AG04450 (cell line): ENCODE measurements at regions of chr12 and their contacts with region 1.

Region 1: DNA sequence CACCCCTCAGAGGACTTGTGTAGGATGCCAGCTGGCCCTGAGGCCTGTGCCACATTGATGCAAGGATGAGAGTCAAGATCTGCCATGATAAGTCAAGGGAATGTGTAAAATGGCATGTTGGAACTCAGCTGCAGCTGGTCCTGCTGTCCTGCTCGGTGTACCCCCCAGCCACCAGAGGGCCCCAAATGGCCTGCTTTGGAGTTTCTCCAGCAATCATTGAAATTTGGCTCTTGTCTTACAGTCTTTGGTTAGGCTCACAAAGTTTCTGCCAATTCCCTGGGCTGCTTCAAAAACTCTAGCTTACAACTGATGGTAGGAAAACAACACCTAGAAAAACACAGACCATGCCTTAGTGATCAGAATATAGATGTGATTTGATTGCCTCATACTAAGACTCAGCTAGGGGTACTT is 76.8 kb downstream of the HSD17B6 start:
- DNase-seq: no peak
- H3K4me3 ChIP-seq: no peak overlapping the region
- H3K27ac ChIP-seq: no peak overlapping the region
- H3K27me3 ChIP-seq: peaks cover 7% of the 10 kb centered on the region
- CTCF ChIP-seq: peak; percentile 42

Region 2: DNA sequence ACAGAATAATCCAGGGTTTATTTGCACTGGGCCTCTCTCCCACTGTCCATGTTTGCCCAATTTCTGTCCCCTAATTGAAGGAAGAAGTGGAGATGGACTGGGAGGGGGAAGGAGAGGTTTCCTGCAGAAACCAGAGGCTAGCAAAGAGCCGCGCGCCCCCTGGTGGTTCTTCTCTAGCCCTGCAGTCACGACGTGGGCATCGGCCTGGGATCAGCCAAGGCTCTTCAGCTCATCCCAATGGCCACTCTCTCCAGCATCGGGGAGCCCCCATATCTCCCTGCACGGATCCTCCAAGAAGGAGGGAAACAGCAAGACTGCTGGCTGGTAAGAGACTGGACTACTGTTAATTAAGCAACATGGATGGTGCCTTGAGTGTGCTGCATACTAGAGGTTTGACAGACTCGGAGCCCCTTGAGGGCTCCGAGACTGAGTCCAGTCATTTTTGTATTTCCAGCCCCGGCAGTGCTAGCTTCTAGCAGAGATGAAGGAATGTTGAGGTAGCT is 147.7 kb after region 1 on chr12:
- CTCF ChIA-PET with region 1: interaction called, 19 read pairs
- POLR2A ChIA-PET with region 1: no interaction called
- DNase-seq: peak; percentile 38
- H3K4me3 ChIP-seq: no peak overlapping the region
- H3K27ac ChIP-seq: no peak overlapping the region
- H3K27me3 ChIP-seq: peaks cover 5% of the 10 kb centered on the region
- CTCF ChIP-seq: peak; percentile 97